Aorta (tissue), 5 donors: ENCODE measurements at regions of chr2 and their contacts with region 1.

Region 1: DNA sequence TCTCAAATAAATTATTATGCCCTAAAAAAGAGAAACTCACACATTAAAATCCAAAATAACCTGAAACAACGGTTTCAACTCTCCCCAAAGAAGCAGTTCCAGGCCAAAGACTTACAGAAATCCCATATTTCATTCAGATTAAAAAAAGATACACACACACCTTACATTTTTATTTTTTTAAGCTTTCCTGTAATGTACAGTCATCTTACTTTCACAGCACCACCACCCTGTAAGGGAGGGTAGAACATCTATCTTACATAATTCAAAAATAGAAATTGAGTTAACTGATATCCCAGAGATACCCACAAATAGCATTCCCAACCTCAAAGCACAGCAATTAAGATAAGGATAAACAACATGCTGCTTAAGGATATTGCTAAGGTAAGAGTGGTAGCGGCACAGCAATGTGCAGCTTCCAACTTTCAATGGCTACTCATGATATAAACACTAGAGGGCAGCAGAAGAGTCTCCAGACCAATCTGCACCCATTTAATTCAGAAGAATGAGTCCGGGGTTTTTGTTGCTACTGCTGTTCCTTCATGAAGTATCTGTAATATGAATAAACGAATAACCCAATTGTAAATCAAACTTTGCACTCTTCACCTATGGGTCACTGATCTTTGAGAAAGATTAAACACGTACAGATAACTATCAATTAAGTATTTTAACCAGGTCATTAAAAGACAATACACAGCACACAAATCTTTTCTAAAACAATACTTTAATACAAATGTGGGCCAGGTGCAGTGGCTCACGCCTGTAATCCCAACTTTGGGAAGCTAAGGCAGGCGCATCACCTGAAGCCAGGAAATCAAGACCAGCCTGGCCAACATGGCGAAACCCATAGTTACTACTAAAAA is 11.3 kb downstream of the GFPT1 start:
- DNase-seq: no peak
- ATAC-seq: peak; percentile 81
- H3K4me3 ChIP-seq: no peak overlapping the region
- H3K27ac ChIP-seq: no peak overlapping the region
- H3K4me1 ChIP-seq: no peaks in the 10 kb centered on the region
- H3K27me3 ChIP-seq: no peaks in the 10 kb centered on the region

Region 2: GRCh38 chr2:69353360-69353759 is 22.4 kb before region 1 on chr2:
- intact Hi-C with region 1: no loop called
- DNase-seq: no peak
- ATAC-seq: no peak
- H3K4me3 ChIP-seq: no peak overlapping the region
- H3K27ac ChIP-seq: peak overlapping the region in 1 of 2 donors; percentile 2
- H3K4me1 ChIP-seq: no peaks in the 10 kb centered on the region
- H3K27me3 ChIP-seq: no peaks in the 10 kb centered on the region

Region 3: GRCh38 chr2:69514406-69514805 is 138.7 kb after region 1 on chr2:
- intact Hi-C with region 1: loop called in 1 of 2 experiments (anchors 10 kb)
- DNase-seq: peak in 1 of 2 donors; percentile 62
- ATAC-seq: peak; percentile 59
- H3K4me3 ChIP-seq: no peak overlapping the region
- H3K27ac ChIP-seq: no peak overlapping the region
- H3K4me1 ChIP-seq: no peaks in the 10 kb centered on the region
- H3K27me3 ChIP-seq: no peaks in the 10 kb centered on the region